GM12878 (cell line): ENCODE measurements at regions of chr12 and their contacts with region 1.

Region 1: GRCh38 chr12:62435303-62436163 is 31.1 kb upstream of the MON2 start:
- DNase-seq: no peak
- ATAC-seq: peak; percentile 87
- H3K4me3 ChIP-seq: peak overlapping the region; percentile 60
- H3K27ac ChIP-seq: no peak overlapping the region
- H3K4me1 ChIP-seq: peaks cover 14% of the 10 kb centered on the region
- H3K27me3 ChIP-seq: 0 out of 4 replicates have a peak, but pooled peaks cover 0 to 1% of the 10 kb centered on the region in 2 experiments
- CTCF ChIP-seq: peak; percentile 48 to 54 (median 53); a peak in 5 of 6 replicates
- EP300 ChIP-seq: no peak
- POLR2A ChIP-seq: no peak
- RAD21 ChIP-seq: peak; percentile 30

Region 2: GRCh38 chr12:62446754-62447452 is 11.4 kb after region 1 on chr12:
- CTCF ChIA-PET with region 1: interaction called, 13 read pairs
- POLR2A ChIA-PET with region 1: no interaction called
- RAD21 ChIA-PET with region 1: no interaction called
- SMC1A ChIA-PET with region 1: interaction called, 8 read pairs
- in situ Hi-C with region 1: no loop called
- intact Hi-C with region 1: no loop called
- DNase-seq: no peak
- ATAC-seq: no peak
- H3K4me3 ChIP-seq: no peak overlapping the region
- H3K27ac ChIP-seq: no peak overlapping the region
- H3K4me1 ChIP-seq: no peaks in the 10 kb centered on the region
- H3K27me3 ChIP-seq: no peaks in the 10 kb centered on the region
- CTCF ChIP-seq: no peak
- EP300 ChIP-seq: no peak
- POLR2A ChIP-seq: no peak
- RAD21 ChIP-seq: no peak

Region 3: DNA sequence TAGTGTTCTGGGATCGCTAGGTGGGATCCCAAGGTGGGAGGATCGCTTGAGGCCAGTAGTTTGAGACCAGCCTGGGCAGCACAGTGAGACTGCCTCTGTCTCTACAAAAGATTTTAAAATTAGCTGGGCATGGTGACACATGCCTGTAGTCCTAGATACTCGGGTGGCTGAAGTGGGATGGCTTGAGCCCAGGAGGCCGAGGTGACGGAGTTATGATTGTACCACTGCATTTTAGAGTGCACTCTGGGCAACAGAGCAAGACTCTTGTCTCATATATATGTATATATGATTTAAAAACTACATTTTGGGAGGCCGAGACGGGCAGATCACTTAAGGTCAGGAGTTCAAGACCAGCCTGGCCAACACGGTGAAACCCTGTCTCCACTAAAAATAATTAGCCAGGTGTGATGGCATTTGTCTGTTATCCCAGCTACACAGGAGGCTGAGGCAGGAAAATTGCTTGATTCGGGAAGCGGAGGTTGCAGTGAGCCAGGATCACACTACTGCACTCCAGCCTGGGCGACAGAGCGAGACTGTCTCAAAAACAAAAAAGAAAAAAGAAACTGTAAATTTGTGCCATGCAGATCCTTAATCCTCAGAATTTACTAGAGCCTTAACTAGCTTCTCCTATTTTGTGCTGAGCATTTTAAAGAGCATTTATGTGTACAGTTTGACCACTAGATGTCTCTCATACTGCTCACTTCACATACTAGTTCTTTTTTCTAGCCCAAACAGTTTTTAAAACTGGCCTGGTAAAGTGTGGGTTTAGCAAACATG is 145.9 kb after region 1 on chr12:
- CTCF ChIA-PET with region 1: interaction called, 8 read pairs
- POLR2A ChIA-PET with region 1: no interaction called
- RAD21 ChIA-PET with region 1: interaction called, 5 read pairs
- SMC1A ChIA-PET with region 1: interaction called, 9 read pairs
- in situ Hi-C with region 1: no loop called
- intact Hi-C with region 1: loop called (anchors 5 kb)
- DNase-seq: no peak
- ATAC-seq: peak; percentile 87
- H3K4me3 ChIP-seq: no peak overlapping the region
- H3K27ac ChIP-seq: no peak overlapping the region
- H3K4me1 ChIP-seq: no peaks in the 10 kb centered on the region
- H3K27me3 ChIP-seq: no peaks in the 10 kb centered on the region
- CTCF ChIP-seq: peak; percentile 49 to 66 (median 65); a peak in 4 of 6 replicates
- EP300 ChIP-seq: no peak
- POLR2A ChIP-seq: no peak
- RAD21 ChIP-seq: peak; percentile 81

Region 4: DNA sequence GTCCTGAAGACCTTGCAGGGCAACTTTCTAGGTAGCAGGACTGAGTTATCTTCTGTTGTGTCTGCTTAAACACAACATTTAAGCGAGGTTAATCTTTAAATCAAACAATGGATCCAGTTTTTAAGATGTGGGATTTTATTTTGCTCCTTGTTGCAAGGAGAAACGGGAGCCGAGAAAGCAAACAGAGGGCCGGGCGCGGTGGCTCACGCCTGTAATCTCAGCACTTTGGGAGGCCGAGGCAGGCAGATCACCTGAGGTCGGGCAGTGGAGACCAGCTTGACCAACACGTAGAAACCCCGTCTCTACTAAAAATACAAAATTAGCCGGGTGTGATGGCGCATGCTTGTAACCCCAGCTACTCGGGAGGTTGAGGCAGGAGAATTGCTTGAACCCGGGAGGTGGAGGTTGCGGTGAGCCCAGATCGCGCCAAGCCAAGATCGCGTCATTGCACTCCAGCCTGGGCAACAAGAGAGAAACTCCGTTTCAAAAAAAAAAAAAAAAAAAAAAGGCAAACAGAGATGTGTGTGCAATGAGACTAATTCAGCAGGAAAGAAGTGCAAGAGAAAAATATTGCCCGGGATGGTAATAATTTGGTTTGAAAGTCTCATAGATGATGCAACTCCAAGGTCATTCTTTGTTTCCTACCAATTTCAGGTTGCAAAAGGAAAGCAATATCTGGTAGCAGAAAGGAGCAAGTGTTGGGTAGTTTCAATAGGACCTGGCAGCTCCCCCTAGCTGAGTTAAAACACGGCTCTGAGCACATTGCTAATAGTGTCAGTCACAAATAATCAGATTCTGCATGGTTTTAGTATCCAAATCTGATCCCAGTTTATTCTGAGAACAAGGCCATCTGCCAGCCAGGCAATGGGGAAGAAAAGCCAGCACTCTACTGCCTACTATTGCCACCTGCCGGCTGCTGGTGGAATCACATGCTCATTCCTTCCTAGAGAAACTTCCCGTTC is 358.0 kb after region 1 on chr12:
- CTCF ChIA-PET with region 1: interaction called, 169 read pairs
- POLR2A ChIA-PET with region 1: no interaction called
- RAD21 ChIA-PET with region 1: interaction called, 57 read pairs
- SMC1A ChIA-PET with region 1: interaction called, 112 read pairs
- in situ Hi-C with region 1: loop called (anchors 5 kb)
- intact Hi-C with region 1: loop called (anchors 1 kb)
- DNase-seq: peak; percentile 27
- ATAC-seq: peak; percentile 84
- H3K4me3 ChIP-seq: no peak overlapping the region
- H3K27ac ChIP-seq: no peak overlapping the region
- H3K4me1 ChIP-seq: no peaks in the 10 kb centered on the region
- H3K27me3 ChIP-seq: no peaks in the 10 kb centered on the region
- CTCF ChIP-seq: peak; percentile 89 to 96 (median 96)
- EP300 ChIP-seq: no peak
- POLR2A ChIP-seq: no peak
- RAD21 ChIP-seq: peak; percentile 98

Region 5: DNA sequence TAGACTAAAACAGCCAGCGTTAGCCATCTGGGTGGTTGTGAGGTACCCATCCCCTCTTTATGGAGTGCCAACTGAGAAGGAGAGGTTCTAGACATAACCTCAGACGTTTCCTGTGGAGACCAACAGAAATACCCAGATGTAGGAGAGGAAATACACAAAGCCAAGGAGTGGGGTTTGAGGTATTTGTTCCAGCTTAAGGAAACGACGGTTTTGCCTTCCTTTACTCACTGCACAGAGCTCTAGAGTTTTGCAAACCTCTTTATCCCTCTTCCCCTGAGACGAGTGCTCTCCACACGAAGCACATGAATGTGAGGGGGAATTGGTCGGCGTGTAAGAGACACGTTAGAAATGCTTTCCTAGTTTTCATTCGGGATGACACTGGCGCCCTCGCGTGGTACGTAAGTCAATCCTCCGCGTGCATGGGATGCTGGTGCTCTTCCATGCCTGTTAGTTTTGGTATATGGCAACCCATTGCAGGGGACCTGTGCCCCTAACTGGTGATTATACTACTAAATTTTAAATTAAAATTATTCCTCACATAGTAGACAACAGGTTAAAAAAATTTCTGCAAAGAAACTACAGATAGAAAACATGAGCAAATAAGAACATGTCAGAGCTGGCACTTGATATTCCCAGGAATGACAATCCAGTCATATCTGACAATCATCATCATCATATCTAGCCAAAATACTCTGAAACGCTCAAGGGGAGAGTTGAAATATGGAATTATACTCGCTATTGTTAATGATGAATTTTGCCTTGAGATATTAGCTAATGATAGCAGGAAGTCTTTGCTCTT is 377.7 kb after region 1 on chr12:
- CTCF ChIA-PET with region 1: interaction called, 49 read pairs
- POLR2A ChIA-PET with region 1: no interaction called
- RAD21 ChIA-PET with region 1: interaction called, 14 read pairs
- SMC1A ChIA-PET with region 1: interaction called, 12 read pairs
- in situ Hi-C with region 1: no loop called
- intact Hi-C with region 1: loop called (anchors 5 kb)
- DNase-seq: no peak
- ATAC-seq: peak; percentile 90
- H3K4me3 ChIP-seq: no peak overlapping the region
- H3K27ac ChIP-seq: no peak overlapping the region
- H3K4me1 ChIP-seq: peaks cover 6% of the 10 kb centered on the region; the same call in 1 of the 2 replicates
- H3K27me3 ChIP-seq: peaks cover 0 to 3% of the 10 kb centered on the region in 2 experiments; a peak in 1 of 4 replicates
- CTCF ChIP-seq: peak; percentile 71 to 78 (median 78)
- EP300 ChIP-seq: no peak
- POLR2A ChIP-seq: no peak
- RAD21 ChIP-seq: peak; percentile 81